B cell (primary cell): ENCODE measurements at regions of chr14 and their contacts with region 1.

Region 1: DNA sequence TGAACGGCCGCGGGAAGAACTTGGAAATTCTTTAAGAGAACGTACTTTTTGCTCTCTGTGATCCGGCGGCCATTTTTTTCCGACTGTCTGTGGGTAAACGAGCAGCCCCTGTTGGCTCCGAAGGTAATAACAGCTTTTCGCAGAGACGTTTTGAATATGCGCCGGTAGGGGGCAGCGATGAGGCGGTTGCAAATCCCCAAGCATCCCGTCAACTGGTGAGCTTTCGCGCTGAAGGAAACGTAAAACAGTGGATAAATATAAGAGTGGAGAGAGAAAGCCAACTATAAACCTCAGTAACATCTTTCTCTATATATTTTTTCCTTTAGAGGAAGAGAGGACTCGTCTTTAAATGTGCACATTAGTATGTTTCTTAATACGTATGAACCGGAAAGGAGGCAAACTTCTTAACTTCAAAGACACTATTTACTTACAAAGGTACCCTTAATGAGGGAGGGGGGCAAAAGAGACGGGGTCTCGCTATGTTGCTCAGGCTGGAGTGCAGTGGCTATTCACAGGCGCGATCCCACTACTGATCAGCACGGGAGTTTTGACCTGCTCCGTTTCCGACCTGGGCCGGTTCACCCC is 9.6 kb upstream of the NEMF start:
- DNase-seq: peak; percentile 94
- ATAC-seq: peak; percentile 46
- H3K4me3 ChIP-seq: peak overlapping the region; percentile 64 to 99 (median 89)
- H3K4me3 Mint-ChIP-seq: no peak overlapping the region
- H3K27ac ChIP-seq: peak overlapping the region; percentile 96 to 99
- H3K27ac Mint-ChIP-seq: no peak overlapping the region
- H3K4me1 ChIP-seq: peaks cover 35 to 48% of the 10 kb centered on the region in 2 donors
- H3K4me1 Mint-ChIP-seq: peaks cover 25% of the 10 kb centered on the region
- H3K27me3 ChIP-seq: no peaks in the 10 kb centered on the region
- H3K27me3 Mint-ChIP-seq: no peaks in the 10 kb centered on the region
- CTCF ChIP-seq: peak; percentile 100

Region 2: DNA sequence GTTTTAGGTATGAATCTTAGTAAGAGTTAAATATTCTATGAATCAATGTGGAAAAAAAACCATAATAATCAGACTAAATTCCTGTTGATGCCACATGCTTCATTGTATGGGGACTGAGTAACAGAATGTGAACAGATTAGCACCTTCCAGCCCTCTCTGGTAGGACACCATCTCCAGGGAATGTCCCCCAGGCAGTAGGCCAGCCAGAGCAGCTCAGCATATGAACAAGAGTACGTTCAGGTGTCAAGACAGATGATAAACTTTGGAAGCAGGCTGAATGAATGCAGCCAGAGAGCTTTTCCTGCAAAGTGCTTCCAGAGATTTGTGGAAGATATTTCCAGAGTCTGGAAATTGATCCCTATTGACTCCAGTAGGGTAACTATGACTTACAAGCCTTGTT is 480.4 kb before region 1 on chr14:
- CTCF ChIA-PET with region 1: no interaction called
- POLR2A ChIA-PET with region 1: no interaction called
- intact Hi-C with region 1: no loop called
- DNase-seq: no peak
- ATAC-seq: no peak
- H3K4me3 ChIP-seq: no peak overlapping the region
- H3K4me3 Mint-ChIP-seq: no peak overlapping the region
- H3K27ac ChIP-seq: no peak overlapping the region
- H3K27ac Mint-ChIP-seq: no peak overlapping the region
- H3K4me1 ChIP-seq: no peaks in the 10 kb centered on the region
- H3K4me1 Mint-ChIP-seq: no peaks in the 10 kb centered on the region
- H3K27me3 ChIP-seq: peaks cover 0 to 4% (median 0%) of the 10 kb centered on the region in 4 experiments
- H3K27me3 Mint-ChIP-seq: peaks cover 24% of the 10 kb centered on the region
- CTCF ChIP-seq: no peak

Region 3: GRCh38 chr14:49598485-49599300 is 263.5 kb before region 1 on chr14 and contains the start of gene LRR1:
- CTCF ChIA-PET with region 1: interaction called, 4 read pairs
- POLR2A ChIA-PET with region 1: no interaction called
- intact Hi-C with region 1: loop called (anchors 2 kb)
- DNase-seq: peak; percentile 95
- ATAC-seq: peak; percentile 73
- H3K4me3 ChIP-seq: peak within 1 kb of the TSS; percentile 75 to 94 (median 80)
- H3K4me3 Mint-ChIP-seq: peak within 1 kb of the TSS; percentile 99
- H3K27ac ChIP-seq: peak within 1 kb of the TSS; percentile 92 to 97
- H3K27ac Mint-ChIP-seq: peak within 1 kb of the TSS; percentile 98
- H3K4me1 ChIP-seq: peaks cover 33 to 42% of the 10 kb centered on the region in 2 donors
- H3K4me1 Mint-ChIP-seq: peaks cover 55% of the 10 kb centered on the region
- H3K27me3 ChIP-seq: no peaks in the 10 kb centered on the region
- H3K27me3 Mint-ChIP-seq: no peaks in the 10 kb centered on the region
- CTCF ChIP-seq: no peak
- total RNA-seq, gene LRR1: 10.3 and 13.0 TPM in 2 replicates

Region 4: DNA sequence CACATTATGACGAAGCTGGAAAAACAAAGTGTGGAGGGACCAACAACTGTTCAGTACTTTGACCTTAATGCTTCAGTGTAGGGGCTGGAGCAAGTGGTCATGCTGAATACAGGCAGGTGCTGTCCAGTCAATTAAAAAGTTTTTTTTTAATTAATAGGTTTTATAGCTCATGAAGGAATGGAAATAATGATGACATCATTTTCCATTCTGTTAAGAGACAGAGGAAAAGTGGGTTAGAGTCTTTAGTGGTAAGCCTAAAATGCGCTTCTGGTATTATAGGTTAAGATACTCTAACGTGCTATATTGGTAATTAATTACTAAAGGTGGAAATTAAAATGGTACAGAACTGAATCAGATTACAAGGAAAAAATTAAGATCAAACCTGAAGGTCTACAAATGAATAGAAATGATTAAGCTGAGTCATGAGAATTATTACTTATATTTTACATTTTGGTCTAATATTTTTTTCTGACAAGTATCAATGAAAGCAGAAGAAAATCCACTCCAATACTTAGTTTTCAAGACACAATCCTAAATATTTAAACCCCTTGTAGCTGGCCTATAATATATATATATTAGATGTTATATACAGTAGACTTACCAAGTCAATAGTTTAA is 78.7 kb before region 1 on chr14:
- CTCF ChIA-PET with region 1: no interaction called
- POLR2A ChIA-PET with region 1: no interaction called
- intact Hi-C with region 1: no loop called
- DNase-seq: no peak
- ATAC-seq: no peak
- H3K4me3 ChIP-seq: no peak overlapping the region
- H3K4me3 Mint-ChIP-seq: no peak overlapping the region
- H3K27ac ChIP-seq: no peak overlapping the region
- H3K27ac Mint-ChIP-seq: no peak overlapping the region
- H3K4me1 ChIP-seq: no peaks in the 10 kb centered on the region
- H3K4me1 Mint-ChIP-seq: peaks cover 2% of the 10 kb centered on the region
- H3K27me3 ChIP-seq: no peaks in the 10 kb centered on the region
- H3K27me3 Mint-ChIP-seq: no peaks in the 10 kb centered on the region
- CTCF ChIP-seq: no peak

Region 5: DNA sequence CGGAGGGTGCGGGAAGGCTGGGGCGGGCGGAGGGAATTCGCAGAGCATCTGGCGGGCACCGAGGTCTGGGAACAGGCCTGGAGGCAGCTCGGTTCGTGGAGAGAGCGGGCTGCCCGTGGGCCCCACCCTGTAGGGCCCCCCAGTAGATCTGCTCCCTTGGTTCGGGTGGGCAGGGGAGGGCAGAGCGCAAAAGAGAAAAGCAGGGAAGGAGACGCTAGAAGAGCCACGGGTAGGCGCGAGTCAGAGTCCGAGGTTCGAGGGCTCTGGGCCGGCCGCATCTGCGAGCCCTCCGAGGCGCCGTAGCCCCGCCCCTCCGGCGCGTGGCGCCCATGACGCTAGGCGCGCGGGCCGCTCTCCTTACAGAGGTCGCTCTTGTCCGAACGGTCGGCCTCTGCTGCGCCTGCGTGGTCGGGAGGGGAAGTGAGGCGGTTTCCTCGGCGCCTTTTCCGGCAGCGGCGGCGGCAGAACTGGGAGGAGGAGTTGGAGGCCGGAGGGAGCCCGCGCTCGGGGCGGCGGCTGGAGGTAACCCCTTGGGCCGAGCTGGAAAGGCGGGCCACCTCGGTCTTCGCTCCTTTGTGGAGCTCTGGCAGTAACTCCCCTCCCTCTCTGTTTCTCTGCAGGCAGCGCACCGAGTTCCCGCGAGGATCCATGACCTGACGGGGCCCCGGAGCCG is 30.6 kb after region 1 on chr14 and contains the start of gene ARF6:
- CTCF ChIA-PET with region 1: interaction called, 48 read pairs
- POLR2A ChIA-PET with region 1: interaction called, 45 read pairs
- intact Hi-C with region 1: no loop called
- DNase-seq: peak; percentile 98
- ATAC-seq: peak; percentile 87
- H3K4me3 ChIP-seq: peak within 1 kb of the TSS; percentile 74 to 96 (median 89)
- H3K4me3 Mint-ChIP-seq: peak within 1 kb of the TSS; percentile 97
- H3K27ac ChIP-seq: peak within 1 kb of the TSS; percentile 98 to 99
- H3K27ac Mint-ChIP-seq: peak within 1 kb of the TSS; percentile 98
- H3K4me1 ChIP-seq: peaks cover 28 to 35% of the 10 kb centered on the region in 2 donors
- H3K4me1 Mint-ChIP-seq: peaks cover 42% of the 10 kb centered on the region
- H3K27me3 ChIP-seq: no peaks in the 10 kb centered on the region
- H3K27me3 Mint-ChIP-seq: no peaks in the 10 kb centered on the region
- CTCF ChIP-seq: no peak
- total RNA-seq, gene ARF6: 132 and 135 TPM in 2 replicates

Region 6: DNA sequence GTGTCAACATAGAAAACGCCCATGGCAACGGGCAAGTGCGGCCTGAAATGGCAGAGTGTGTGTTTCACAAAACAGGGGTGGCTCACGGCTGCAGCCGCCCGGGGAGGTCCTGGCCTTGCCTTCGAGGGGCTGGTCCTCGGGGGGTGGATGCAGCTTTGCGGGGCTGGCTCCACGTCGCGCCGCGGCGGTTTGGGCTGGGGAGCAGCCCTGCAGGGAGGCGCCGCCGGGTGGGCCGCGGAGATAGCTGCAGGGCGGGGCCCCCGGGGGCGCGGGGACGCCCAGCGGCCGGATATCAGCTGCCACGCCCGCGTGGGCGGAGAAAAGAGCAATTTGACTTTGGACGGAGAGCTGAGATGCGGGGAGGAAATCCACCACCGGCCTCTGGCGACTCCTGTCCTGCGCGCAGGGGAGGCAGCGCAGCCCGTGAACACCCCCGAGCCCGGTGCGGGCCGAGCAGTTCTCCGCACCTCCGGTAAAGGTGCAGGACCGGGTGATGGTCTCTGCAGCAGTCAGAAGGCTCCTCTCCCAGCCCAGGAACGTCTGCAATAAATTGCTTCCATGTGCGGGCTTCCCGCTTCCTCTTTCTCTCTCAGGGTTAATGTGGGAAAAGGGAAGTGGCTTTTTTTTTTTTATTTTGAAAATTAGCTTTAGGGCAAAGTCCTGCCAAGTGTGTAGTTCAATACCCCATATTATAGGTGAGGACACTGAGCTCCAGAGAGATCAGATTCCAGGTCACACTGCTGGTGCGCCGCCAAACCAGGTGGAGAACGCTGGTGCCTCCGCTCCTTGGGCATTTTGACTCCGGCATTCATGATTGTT is 141.2 kb after region 1 on chr14:
- CTCF ChIA-PET with region 1: interaction called, 114 read pairs
- POLR2A ChIA-PET with region 1: interaction called, 29 read pairs
- intact Hi-C with region 1: loop called (anchors 1 kb)
- DNase-seq: peak; percentile 91
- ATAC-seq: peak; percentile 62
- H3K4me3 ChIP-seq: peak overlapping the region; percentile 21 to 69 (median 59)
- H3K4me3 Mint-ChIP-seq: peak overlapping the region; percentile 91
- H3K27ac ChIP-seq: peak overlapping the region; percentile 98 to 99
- H3K27ac Mint-ChIP-seq: peak overlapping the region; percentile 96
- H3K4me1 ChIP-seq: peaks cover 70 to 75% of the 10 kb centered on the region in 2 donors
- H3K4me1 Mint-ChIP-seq: peaks cover 79% of the 10 kb centered on the region
- H3K27me3 ChIP-seq: no peaks in the 10 kb centered on the region
- H3K27me3 Mint-ChIP-seq: no peaks in the 10 kb centered on the region
- CTCF ChIP-seq: peak; percentile 44

Region 7: DNA sequence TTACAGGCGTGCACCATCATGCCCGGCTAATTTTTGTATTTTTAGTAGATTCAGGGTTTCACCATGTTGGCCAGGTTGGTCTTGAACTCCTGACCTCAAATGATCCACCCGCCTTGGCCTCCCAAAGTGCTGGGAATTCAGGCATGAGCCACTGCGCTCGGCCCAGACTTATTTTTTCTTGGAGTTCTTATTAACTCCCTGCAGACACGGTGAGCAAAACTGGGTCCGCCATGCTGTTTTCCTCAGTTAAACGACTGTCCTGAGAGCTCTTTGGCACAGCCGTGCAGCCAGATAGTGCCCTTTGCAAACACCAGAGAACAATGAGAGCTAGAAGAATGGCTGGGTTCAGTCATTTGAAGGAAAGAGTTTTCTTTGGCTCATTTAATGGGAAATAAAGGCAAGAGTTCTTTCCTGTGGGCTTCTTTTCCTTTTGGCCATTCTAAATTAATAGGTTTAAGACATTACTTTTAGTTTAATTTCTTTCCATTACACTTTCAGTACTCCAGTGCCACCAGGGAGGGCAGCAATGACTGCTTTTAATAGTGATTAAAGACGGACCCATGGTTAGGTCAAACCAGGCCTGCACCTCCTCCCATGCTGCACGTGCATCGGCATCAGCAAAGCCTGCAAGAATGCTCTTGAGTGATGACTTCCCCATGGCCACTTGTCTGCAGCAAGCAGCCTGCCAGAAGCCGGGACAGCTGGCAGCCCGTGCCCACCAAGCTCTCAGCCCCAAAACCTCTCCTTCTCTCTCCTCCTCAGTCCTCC is 193.5 kb after region 1 on chr14:
- CTCF ChIA-PET with region 1: interaction called, 89 read pairs
- POLR2A ChIA-PET with region 1: no interaction called
- intact Hi-C with region 1: no loop called
- DNase-seq: peak; percentile 64
- ATAC-seq: peak; percentile 93
- H3K4me3 ChIP-seq: no peak overlapping the region
- H3K4me3 Mint-ChIP-seq: peak overlapping the region; percentile 7
- H3K27ac ChIP-seq: no peak overlapping the region
- H3K27ac Mint-ChIP-seq: peak overlapping the region; percentile 77
- H3K4me1 ChIP-seq: peaks cover 15 to 35% of the 10 kb centered on the region in 2 donors
- H3K4me1 Mint-ChIP-seq: peaks cover 44% of the 10 kb centered on the region
- H3K27me3 ChIP-seq: no peaks in the 10 kb centered on the region
- H3K27me3 Mint-ChIP-seq: no peaks in the 10 kb centered on the region
- CTCF ChIP-seq: peak; percentile 52

Region 8: GRCh38 chr14:50085570-50086320 is 223.6 kb after region 1 on chr14:
- CTCF ChIA-PET with region 1: interaction called, 70 read pairs
- POLR2A ChIA-PET with region 1: interaction called, 14 read pairs
- intact Hi-C with region 1: loop called (anchors 2 kb)
- DNase-seq: peak; percentile 91
- ATAC-seq: peak; percentile 75
- H3K4me3 ChIP-seq: peak overlapping the region in 3 of 5 experiments; percentile 18 to 48 (median 24)
- H3K4me3 Mint-ChIP-seq: peak overlapping the region; percentile 82
- H3K27ac ChIP-seq: peak overlapping the region; percentile 95 to 100
- H3K27ac Mint-ChIP-seq: peak overlapping the region; percentile 96
- H3K4me1 ChIP-seq: peaks cover 85 to 91% of the 10 kb centered on the region in 2 donors
- H3K4me1 Mint-ChIP-seq: peaks cover 87% of the 10 kb centered on the region
- H3K27me3 ChIP-seq: no peaks in the 10 kb centered on the region
- H3K27me3 Mint-ChIP-seq: no peaks in the 10 kb centered on the region
- CTCF ChIP-seq: no peak

Region 9: GRCh38 chr14:50311975-50312733 is 450.0 kb after region 1 on chr14 and contains the starts of genes DMAC2L and L2HGDH:
- CTCF ChIA-PET with region 1: interaction called, 4 read pairs
- POLR2A ChIA-PET with region 1: interaction called, 5 read pairs
- intact Hi-C with region 1: loop called (anchors 5 kb)
- DNase-seq: peak; percentile 95
- ATAC-seq: peak; percentile 93
- H3K4me3 ChIP-seq: peak within 1 kb of the TSS; percentile 73 to 81 (median 79)
- H3K4me3 Mint-ChIP-seq: peak within 1 kb of the TSS; percentile 97
- H3K27ac ChIP-seq: peak within 1 kb of the TSS; percentile 86
- H3K27ac Mint-ChIP-seq: peak within 1 kb of the TSS; percentile 98
- H3K4me1 ChIP-seq: peaks cover 13 to 16% of the 10 kb centered on the region in 2 donors
- H3K4me1 Mint-ChIP-seq: peaks cover 36% of the 10 kb centered on the region
- H3K27me3 ChIP-seq: no peaks in the 10 kb centered on the region
- H3K27me3 Mint-ChIP-seq: no peaks in the 10 kb centered on the region
- CTCF ChIP-seq: peak; percentile 42
- total RNA-seq, gene DMAC2L: 31.9 and 40.0 TPM in 2 replicates
- total RNA-seq, gene L2HGDH: 5.5 and 5.6 TPM in 2 replicates